HEK293 (cell line): ENCODE measurements at regions of chr1 and their contacts with region 1.

Region 1: GRCh38 chr1:204494281-204495077 is at the start of gene PIK3C2B:
- H3K4me3 ChIP-seq: peak within 1 kb of the TSS; percentile 80
- H3K27ac ChIP-seq: peak within 1 kb of the TSS; percentile 90
- H3K4me1 ChIP-seq: peaks cover 5% of the 10 kb centered on the region
- CTCF ChIP-seq: peak; percentile 80; the same call in 1 of the 2 replicates

Region 2: DNA sequence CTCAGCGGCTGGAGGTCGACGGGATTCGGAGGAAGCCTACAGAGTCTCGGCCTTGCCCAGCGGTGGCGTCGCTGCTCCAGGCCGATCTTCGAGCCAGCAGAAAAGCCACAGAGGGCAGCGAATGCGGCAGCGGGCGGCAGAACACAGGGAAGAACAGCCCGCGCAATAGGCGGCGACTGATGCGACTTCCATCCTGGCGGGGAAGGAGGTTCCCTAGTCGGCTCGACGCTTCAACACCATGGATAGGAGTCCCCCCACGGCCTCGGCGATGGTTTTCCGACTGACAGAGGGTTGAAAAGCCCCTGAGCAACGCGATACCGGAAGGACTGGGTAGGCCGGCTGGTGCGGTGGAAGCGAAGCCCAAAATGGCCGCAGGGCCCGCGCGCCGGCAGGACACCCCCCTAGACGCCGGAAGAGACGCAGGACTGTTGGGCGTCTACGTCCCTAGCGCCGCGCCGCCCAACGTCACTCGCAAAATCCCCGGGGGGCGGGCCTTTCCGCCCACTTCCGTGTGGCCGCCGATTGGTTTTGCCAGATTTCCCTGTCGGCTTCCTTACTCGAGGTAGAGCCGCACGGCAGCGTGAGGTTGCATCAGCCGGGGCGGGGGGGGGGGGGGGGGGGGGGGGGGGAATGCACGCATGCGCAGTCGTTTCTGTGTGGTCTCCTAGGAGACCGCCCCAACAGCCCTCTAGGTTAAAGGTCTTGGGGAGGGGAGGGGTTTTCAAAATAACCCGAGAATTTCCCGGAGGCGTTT is 82.9 kb before region 1 on chr1 and contains the start of gene PPP1R15B:
- CTCF ChIA-PET with region 1: interaction called, 13 read pairs
- POLR2A ChIA-PET with region 1: interaction called, 6 read pairs
- H3K4me3 ChIP-seq: peak within 1 kb of the TSS; percentile 62
- H3K27ac ChIP-seq: peak within 1 kb of the TSS; percentile 90
- H3K4me1 ChIP-seq: no peaks in the 10 kb centered on the region; the same call in 1 of the 2 replicates
- CTCF ChIP-seq: no peak

Region 3: DNA sequence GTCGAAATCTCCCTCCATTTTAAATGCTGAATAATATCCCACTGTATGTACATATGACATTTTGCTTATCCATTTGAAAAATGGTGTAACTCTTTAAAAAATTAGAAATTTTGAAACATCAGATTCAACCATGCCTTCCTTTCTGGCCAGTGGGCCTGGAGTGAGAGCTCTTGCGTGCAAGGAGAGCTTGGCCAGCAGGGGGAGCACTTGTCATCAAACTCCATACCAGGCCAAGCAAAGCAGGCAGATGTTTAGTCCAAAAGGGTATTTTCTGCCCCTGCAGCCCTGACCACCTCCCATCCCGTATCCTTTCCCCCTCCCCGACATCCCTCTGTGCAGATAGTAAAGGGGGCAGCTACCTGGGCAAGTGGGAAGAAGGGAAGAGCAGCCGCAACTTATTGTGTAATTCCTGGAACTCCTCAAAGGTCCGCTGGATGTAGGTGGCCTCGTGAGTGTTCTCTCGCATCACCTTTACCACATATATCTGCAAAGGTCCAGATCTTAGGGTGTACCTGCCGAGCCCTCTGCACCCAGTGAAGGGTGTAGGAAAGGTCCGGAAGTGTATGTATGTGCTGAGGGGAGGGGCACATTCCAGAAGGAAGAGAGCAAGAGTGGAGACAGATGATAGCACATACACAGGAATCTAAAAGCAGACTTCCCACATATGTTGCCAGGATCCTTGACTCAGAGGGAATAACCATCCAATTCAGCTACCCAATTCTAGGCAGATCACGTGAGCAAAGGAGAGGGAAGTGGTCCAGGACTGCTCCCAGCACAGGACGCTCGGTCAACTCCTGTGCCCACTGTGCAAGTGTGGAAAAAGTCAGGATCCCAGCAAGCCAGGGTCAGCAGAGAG is 62.9 kb before region 1 on chr1:
- CTCF ChIA-PET with region 1: interaction called, 58 read pairs
- POLR2A ChIA-PET with region 1: interaction called, 7 read pairs
- H3K4me3 ChIP-seq: no peak overlapping the region
- H3K27ac ChIP-seq: no peak overlapping the region
- H3K4me1 ChIP-seq: no peaks in the 10 kb centered on the region
- CTCF ChIP-seq: peak; percentile 50; the same call in 1 of the 2 replicates

Region 4: GRCh38 chr1:204446370-204447111 is 47.9 kb before region 1 on chr1:
- CTCF ChIA-PET with region 1: interaction called, 314 read pairs
- POLR2A ChIA-PET with region 1: interaction called, 20 read pairs
- H3K4me3 ChIP-seq: no peak overlapping the region
- H3K27ac ChIP-seq: no peak overlapping the region
- H3K4me1 ChIP-seq: peaks cover 3% of the 10 kb centered on the region; the same call in 1 of the 2 replicates
- CTCF ChIP-seq: peak; percentile 53; the same call in 1 of the 2 replicates

Region 5: GRCh38 chr1:204477036-204477740 is 17.3 kb before region 1 on chr1:
- CTCF ChIA-PET with region 1: interaction called, 5 read pairs
- POLR2A ChIA-PET with region 1: interaction called, 16 read pairs
- H3K4me3 ChIP-seq: no peak overlapping the region
- H3K27ac ChIP-seq: no peak overlapping the region
- H3K4me1 ChIP-seq: no peaks in the 10 kb centered on the region; the same call in 1 of the 2 replicates
- CTCF ChIP-seq: no peak

Region 6: DNA sequence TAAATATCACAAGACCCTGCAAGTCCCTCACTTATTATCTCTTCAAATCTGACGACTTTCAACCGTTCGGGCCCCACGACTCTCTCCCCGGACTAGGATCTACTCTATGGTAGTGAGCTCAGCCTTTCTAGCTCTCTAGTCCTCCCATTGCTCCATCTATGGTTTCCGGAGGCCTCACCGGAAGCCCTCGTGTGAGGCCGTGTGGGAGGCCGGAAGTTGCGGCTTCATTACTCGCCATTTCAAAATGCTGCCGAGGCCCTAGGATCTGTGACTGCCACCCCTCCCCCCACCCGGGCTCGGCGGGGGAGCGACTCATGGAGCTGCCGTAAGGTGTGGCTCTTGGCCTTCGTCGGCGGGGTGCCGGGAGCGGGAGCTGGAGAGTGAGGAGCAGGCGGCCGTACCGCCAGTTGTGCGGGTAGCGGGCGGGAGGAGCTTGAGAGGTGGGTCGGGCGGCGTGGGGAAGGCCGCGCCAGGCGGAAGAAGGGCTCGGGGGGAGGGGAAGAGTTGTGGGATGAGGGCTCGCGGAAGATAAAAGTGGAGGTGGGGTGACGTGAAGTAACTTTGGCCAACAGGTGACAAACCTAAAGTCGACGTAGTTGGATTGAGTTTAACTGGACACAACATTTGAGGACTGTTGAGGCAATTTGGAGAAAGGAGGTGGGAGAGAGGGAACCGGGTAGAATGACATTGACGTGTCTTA is 21.9 kb after region 1 on chr1 and contains the start of gene MDM4:
- CTCF ChIA-PET with region 1: no interaction called
- POLR2A ChIA-PET with region 1: interaction called, 12 read pairs
- H3K4me3 ChIP-seq: peak within 1 kb of the TSS; percentile 99
- H3K27ac ChIP-seq: peak within 1 kb of the TSS; percentile 85
- H3K4me1 ChIP-seq: no peaks in the 10 kb centered on the region
- CTCF ChIP-seq: peak; percentile 66